Heart left ventricle (tissue), 16 donors: ENCODE measurements at regions of chr12 and their contacts with region 1.

Region 1: DNA sequence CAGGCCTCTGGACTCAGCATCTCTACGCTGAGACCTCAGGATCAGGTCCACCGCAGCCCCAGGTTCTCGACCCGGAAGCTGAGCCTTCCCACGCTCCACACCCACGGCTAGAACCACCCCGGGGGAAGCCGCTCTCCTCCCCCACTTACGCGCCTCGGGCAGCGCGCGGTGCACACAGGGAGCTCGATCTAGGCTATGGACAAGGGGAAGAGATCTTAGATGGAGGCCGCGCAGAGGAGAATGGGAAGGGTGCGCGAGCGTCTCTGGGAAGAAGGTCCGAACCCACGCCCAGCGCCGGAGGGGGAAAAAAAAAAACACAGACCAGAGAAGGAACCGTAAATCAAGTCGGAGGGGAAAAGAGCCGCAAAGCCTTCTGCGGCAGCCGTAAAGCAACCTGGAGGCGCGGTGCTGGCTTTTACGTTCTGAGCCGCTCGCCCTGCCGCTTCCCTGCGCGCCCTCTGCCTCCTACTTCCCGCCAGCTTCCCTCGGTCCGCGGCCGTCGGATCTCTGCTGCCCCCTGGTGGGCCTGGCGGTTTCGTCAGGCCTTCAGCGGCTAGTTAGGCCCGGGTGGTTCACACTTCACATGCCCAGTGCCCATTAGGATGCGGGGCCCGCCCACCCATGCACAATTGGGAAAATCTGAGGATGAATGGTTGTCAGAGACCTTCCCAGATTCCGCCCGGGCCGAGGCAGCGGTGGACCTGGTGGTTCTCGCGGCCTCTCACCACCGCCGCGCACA is at the start of gene RAD52:
- DNase-seq: peak; percentile 98 to 99 (median 98)
- ATAC-seq: peak; percentile 97 to 98 (median 97)
- H3K4me3 ChIP-seq: peak within 1 kb of the TSS; percentile 68 to 94 (median 82)
- H3K27ac ChIP-seq: peak within 1 kb of the TSS; percentile 76 to 98 (median 92)
- H3K4me1 ChIP-seq: peaks cover 0 to 22% (median 12%) of the 10 kb centered on the region in 12 donors
- H3K27me3 ChIP-seq: no peaks in the 10 kb centered on the region
- CTCF ChIP-seq: peak; percentile 95 to 100 (median 99)
- POLR2A ChIP-seq: peak in 1 of 2 donors; percentile 48
- total RNA-seq, gene RAD52: 4.1 to 9.7 (median 6.2) TPM

Region 2: DNA sequence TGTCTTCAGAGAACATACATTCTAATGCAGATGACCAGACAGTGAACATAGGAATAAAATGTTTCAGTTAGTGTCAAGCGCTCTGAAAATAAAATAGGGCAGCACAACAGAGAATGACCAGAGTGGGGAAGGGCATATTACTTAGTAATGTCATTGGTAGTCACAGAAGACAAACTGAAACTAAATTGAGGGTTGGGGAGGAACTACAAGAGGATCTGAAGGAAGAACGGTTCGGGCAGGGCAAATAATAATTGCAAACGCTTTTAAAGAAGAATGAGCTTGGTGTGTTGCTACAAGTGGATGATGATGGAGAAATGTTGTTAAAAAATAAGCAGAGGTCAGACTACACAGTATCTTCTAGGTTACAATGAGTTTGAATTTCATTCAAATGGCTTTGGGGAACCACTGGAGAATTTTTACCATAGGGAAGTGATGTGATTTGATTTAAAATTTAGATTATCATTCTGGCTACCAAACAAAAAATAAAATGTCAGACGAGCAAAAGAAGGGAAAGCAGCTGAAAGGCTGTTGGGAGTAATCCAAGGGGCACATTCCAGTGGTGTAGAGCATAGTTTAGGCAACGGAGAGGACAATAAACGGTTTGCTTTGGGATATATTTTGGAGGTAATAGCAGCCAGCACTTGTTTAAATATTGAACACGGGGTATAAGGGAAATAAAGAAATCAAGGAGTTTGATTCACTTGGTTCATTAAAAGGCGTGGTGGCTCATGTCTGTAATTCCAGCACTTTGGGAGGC is 630.7 kb before region 1 on chr12:
- intact Hi-C with region 1: no loop called
- DNase-seq: no peak
- ATAC-seq: no peak
- H3K4me3 ChIP-seq: no peak overlapping the region
- H3K27ac ChIP-seq: no peak overlapping the region
- H3K4me1 ChIP-seq: no peaks in the 10 kb centered on the region
- H3K27me3 ChIP-seq: no peaks in the 10 kb centered on the region
- CTCF ChIP-seq: no peak
- POLR2A ChIP-seq: no peak

Region 3: DNA sequence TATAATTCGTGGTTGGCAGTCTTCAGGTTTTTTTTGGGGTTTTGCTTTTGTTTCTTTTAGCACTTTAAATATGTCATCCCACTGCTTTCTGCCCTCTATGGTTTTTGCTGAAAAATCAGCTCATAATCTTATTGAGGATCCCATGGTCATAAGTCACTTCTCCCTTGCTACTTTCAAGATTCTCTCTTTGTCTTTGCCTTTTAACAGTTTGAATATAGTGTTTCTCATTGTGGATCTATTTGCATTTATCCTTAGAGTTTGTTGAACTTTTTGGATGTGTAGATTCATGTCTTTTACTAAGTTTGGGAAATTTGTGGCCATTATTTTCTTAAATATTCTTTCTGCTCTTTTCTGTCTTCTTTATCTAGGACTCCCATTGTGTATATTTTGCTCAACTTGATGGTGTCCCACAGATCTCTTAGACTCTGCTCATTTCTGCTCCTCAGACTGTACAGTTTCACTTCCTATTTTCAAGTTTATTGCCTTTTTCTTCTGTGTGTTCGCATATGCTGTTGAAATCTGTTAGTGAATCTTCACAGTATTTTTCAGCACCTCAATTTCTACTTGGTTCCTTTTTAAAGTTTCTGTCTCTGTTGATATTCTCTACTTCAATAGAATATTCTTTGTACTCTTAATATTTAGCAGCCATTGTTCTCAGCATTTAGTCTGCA is 126.5 kb before region 1 on chr12:
- intact Hi-C with region 1: loop called in 1 of 10 experiments (anchors 5 kb)
- DNase-seq: no peak
- ATAC-seq: no peak
- H3K4me3 ChIP-seq: no peak overlapping the region
- H3K27ac ChIP-seq: peak overlapping the region in 1 of 12 donors; percentile 47
- H3K4me1 ChIP-seq: peaks cover 0 to 40% (median 16%) of the 10 kb centered on the region in 12 donors
- H3K27me3 ChIP-seq: no peaks in the 10 kb centered on the region
- CTCF ChIP-seq: no peak
- POLR2A ChIP-seq: no peak

Region 4: GRCh38 chr12:920676-921075 is 28.9 kb before region 1 on chr12:
- intact Hi-C with region 1: no loop called
- DNase-seq: no peak
- ATAC-seq: no peak
- H3K4me3 ChIP-seq: no peak overlapping the region
- H3K27ac ChIP-seq: no peak overlapping the region
- H3K4me1 ChIP-seq: peaks cover 0 to 4% (median 0%) of the 10 kb centered on the region in 12 donors
- H3K27me3 ChIP-seq: no peaks in the 10 kb centered on the region
- CTCF ChIP-seq: no peak
- POLR2A ChIP-seq: no peak

Region 5: DNA sequence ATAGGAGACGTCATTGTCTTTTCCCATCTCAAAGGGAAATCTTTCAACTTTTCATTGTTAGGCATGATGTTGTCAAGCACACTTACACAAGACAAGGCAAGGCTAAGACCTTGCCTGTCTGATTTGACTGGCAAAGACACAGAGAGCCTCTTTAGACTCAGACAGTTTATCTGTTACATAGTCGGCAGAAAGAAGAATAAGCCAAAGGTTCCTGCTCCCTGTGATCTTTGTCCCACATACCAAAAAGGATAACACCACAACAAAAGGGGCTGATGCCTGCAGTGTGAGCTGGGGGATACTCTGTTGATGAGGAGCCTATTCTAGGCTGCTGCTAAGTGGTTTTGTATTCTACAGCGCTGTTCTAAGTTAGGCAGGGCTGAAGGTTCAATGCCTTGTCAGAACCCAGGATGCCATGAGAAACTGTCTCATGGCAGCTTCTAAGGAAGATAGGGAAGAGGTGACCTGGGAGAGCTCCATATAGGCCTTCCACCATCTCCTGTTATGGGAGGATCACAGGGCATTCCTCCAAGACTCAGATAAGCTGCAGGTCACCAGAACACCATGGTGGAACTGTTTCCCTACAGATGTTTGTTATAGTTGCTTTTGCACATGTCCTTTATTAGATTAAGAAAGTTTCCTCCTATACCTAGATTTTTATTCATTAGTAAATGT is 54.1 kb after region 1 on chr12:
- intact Hi-C with region 1: no loop called
- DNase-seq: no peak
- ATAC-seq: peak; percentile 49 to 74 (median 61)
- H3K4me3 ChIP-seq: no peak overlapping the region
- H3K27ac ChIP-seq: peak overlapping the region in 8 of 12 donors; percentile 8 to 65 (median 32)
- H3K4me1 ChIP-seq: peaks cover 0 to 26% (median 8%) of the 10 kb centered on the region in 12 donors
- H3K27me3 ChIP-seq: no peaks in the 10 kb centered on the region
- CTCF ChIP-seq: no peak
- POLR2A ChIP-seq: no peak

Region 6: DNA sequence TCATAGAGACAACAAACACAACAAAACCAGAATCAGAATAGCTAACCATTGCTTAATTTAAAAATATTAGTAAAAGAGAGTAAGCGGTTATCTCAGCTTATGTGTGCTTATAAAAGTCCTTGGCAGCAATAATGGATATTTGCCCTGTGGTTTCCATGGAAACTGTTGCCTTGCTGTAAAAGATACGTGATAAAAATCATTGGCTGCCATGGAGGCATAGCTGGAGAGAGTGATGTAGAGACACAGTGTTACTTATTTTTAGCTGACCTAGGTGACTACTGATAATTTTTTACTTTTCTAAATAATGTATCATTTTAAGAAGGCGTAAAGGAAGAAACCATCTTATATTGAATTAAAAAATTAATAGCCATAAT is 134.3 kb after region 1 on chr12:
- intact Hi-C with region 1: loop called in 1 of 10 experiments (anchors 5 kb)
- DNase-seq: no peak
- ATAC-seq: peak in 3 of 4 donors; percentile 15 to 47 (median 20)
- H3K4me3 ChIP-seq: peak overlapping the region in 3 of 12 donors; percentile 2 to 44 (median 4)
- H3K27ac ChIP-seq: peak overlapping the region in 7 of 12 donors; percentile 0 to 69 (median 39)
- H3K4me1 ChIP-seq: peaks cover 0 to 19% (median 2%) of the 10 kb centered on the region in 12 donors
- H3K27me3 ChIP-seq: no peaks in the 10 kb centered on the region
- CTCF ChIP-seq: no peak
- POLR2A ChIP-seq: no peak

Region 7: DNA sequence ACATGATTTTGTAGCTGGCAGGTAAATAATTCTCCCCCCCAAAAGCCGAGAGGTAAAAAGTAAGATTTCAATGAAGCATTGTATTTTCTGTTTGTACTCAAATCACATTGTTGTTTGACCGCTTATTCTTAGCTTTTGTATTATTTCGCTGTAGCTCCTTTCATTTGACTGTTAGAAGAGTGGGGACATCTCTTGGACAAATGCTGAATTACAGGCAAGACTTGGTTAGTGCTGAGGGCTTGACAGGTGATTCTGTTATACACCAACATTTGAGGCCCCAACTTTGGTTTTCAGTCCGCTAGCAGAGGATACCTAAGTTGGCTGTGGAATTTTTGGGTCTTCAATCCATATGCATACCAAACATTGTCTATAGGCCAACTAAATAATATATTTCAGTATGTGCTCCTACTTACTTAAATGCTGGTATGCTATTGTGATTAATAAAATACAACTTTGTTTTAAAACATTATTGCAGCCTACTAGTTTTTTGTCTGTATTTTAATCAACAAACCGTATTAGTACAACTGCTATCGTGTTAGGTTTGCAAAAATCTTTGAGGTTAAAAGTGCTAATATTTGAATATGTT is 143.6 kb after region 1 on chr12:
- intact Hi-C with region 1: loop called in 6 of 10 experiments (anchors 5 to 10 kb)
- DNase-seq: peak in 1 of 5 donors; percentile 16
- ATAC-seq: peak in 3 of 4 donors; percentile 63 to 69 (median 67)
- H3K4me3 ChIP-seq: no peak overlapping the region
- H3K27ac ChIP-seq: no peak overlapping the region
- H3K4me1 ChIP-seq: peaks cover 0 to 17% (median 4%) of the 10 kb centered on the region in 12 donors
- H3K27me3 ChIP-seq: no peaks in the 10 kb centered on the region
- CTCF ChIP-seq: peak; percentile 54 to 80 (median 74)
- POLR2A ChIP-seq: no peak

Region 8: DNA sequence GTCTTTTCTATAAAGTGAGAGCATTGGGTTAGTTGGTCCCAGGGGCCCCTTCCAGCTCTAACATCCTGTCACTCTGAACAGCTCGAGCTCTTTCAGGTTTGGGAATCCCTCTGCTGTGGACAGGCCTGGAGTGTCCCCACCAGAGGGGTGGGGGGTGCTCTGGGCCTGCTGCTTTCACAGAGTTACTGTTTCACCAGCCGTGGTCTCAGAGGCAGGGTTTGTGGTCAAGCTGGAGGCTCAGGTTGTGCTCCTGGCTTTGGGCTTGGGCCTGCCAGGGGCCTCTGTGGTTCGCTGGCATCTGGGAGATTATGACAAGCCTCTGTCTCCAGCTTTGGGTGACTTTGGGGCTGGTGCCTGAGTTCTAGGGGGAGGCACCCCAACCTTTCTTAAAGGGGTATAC is 585.1 kb after region 1 on chr12:
- intact Hi-C with region 1: no loop called
- DNase-seq: no peak
- ATAC-seq: no peak
- H3K4me3 ChIP-seq: no peak overlapping the region
- H3K27ac ChIP-seq: no peak overlapping the region
- H3K4me1 ChIP-seq: peaks cover 0 to 24% (median 2%) of the 10 kb centered on the region in 12 donors
- H3K27me3 ChIP-seq: peaks cover 5 to 72% (median 13%) of the 10 kb centered on the region in 9 donors
- CTCF ChIP-seq: no peak
- POLR2A ChIP-seq: no peak

Region 9: DNA sequence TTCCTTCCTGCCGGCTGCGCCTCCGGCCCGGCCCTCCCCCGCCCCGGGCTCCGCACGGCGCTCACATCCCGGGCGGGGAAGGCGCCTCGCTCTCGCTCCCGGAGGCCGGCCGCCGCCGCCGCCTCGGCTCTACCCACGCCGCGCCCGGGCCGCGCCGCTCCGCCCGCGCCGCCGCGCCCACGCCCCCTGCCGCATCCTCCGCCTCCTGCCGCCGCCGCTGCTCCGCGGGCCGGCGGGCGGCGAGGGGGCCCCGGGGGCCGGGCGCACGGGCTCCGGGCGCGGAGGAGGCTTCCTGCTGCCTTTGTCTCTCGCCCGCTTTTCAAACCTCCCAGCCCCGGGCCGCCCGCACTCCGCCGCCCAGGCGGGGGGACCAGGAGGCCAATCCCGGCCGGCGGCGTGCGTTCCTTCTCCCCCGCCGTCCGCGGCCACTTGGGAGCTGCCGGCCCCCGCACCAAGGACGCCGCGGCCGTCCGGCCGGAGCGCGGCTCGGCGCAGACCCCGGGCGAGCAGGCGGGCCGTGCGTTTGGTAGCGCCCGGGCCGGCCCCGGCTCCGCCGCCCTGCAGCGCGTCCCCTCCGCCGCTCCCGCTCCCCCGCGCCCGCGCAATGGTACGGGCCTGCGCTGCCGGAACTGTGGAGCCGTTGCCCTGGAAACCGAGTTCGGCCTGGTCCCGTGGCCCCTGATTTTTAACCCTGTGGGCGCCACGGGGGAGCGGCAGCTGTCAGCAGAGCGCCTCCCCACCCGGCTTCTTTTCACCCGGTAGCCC is 644.8 kb after region 1 on chr12 and contains the start of gene FBXL14:
- intact Hi-C with region 1: loop called in 1 of 10 experiments (anchors 5 kb)
- DNase-seq: peak; percentile 93 to 95 (median 94)
- ATAC-seq: peak; percentile 74 to 83 (median 82)
- H3K4me3 ChIP-seq: peak within 1 kb of the TSS; percentile 58 to 99 (median 86)
- H3K27ac ChIP-seq: peak within 1 kb of the TSS; percentile 87 to 97 (median 93)
- H3K4me1 ChIP-seq: peaks cover 0 to 53% (median 39%) of the 10 kb centered on the region in 12 donors
- H3K27me3 ChIP-seq: no peaks in the 10 kb centered on the region
- CTCF ChIP-seq: peak in 1 of 12 donors; percentile 7
- POLR2A ChIP-seq: peak in 1 of 2 donors; percentile 40
- total RNA-seq, gene FBXL14: 4.7 to 10.1 (median 8.4) TPM